ENCODE measurements at regions of chr3 and their contacts with region 1.

Region 1: DNA sequence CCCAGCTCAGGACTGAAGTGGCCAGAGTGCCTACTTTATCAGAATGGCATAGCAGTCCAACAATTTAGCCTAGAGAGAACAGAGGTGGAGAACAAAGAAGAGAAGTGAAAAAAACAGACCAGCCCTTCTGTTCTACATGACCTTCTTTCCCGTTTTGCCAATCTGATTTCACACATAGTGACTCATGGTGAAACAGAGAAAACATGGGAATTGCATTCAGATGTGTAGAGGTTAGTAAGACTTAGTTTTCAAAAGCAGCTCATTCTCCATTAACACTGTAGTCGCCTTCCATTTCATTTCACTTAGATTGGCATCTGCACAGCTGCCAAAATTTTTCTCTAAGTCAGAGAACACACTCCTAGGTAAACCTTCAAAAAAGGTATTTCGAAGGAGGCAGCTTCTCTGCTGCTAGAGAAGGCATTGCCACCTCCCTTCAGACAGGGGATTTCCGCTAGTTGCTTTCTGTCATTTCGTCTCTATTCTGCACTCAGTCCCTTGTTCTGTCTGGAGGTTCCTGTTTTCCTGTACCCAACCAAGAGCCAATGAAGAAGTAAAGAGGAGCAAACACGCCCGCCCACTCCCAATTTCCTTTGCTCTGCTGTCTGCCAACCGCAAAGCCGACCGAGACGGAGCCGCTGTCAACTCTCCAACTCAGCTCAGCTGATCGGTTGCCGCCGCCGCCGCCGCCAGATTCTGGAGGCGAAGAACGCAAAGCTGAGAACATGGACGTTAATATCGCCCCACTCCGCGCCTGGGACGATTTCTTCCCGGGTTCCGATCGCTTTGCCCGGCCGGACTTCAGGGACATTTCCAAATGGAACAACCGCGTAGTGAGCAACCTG is at the start of gene ARL6IP5:
- DNase-seq: peak; percentile 92
- ATAC-seq: peak; percentile 70
- H3K4me3 Mint-ChIP-seq: peak within 1 kb of the TSS; percentile 99
- H3K27ac Mint-ChIP-seq: peak within 1 kb of the TSS; percentile 97
- H3K4me1 Mint-ChIP-seq: peaks cover 52% of the 10 kb centered on the region
- H3K27me3 Mint-ChIP-seq: no peaks in the 10 kb centered on the region
- total RNA-seq, gene ARL6IP5: 147 to 150 TPM

Region 2: DNA sequence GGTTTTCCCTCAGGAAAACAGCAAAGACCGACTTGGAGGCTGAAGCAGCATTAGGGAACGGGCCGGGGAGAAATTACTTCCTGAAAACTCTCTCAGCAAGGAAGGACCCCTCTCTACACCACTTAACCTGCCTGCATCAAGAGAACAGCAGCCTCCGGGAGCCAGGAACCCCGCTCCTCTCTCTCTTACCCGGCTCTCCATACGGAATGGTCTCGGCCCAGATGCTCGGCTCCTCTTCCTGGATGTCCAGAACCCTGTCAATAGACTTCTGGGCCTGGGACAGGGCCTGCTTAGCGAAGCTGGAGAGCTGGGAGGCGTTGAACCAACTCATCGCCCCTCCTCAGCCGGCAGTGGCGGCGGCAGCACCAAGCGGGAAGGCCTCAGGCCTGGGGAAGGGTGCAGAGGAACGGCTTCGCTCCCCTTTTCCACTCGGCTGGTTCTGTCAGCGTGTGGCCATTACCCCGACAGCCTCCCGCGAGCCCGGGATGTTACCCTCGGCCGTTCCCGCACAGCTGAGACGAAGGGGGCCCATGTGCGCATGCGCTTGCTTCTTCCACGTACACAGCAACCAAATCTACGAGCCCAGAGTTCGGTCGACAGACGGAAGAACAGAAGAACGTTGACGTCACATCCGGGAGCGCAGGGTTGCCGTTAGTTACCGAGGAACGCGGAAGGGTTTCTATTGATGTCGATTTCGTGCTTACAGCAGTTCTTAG is 32.6 kb before region 1 on chr3 and contains the start of gene TMF1:
- POLR2A ChIA-PET with region 1: interaction called, 60 read pairs
- DNase-seq: peak; percentile 95
- ATAC-seq: peak; percentile 95
- H3K4me3 Mint-ChIP-seq: peak within 1 kb of the TSS; percentile 98
- H3K27ac Mint-ChIP-seq: peak within 1 kb of the TSS; percentile 97
- H3K4me1 Mint-ChIP-seq: peaks cover 39% of the 10 kb centered on the region
- H3K27me3 Mint-ChIP-seq: no peaks in the 10 kb centered on the region
- total RNA-seq, gene TMF1: 53.5 to 55.2 TPM

Region 3: DNA sequence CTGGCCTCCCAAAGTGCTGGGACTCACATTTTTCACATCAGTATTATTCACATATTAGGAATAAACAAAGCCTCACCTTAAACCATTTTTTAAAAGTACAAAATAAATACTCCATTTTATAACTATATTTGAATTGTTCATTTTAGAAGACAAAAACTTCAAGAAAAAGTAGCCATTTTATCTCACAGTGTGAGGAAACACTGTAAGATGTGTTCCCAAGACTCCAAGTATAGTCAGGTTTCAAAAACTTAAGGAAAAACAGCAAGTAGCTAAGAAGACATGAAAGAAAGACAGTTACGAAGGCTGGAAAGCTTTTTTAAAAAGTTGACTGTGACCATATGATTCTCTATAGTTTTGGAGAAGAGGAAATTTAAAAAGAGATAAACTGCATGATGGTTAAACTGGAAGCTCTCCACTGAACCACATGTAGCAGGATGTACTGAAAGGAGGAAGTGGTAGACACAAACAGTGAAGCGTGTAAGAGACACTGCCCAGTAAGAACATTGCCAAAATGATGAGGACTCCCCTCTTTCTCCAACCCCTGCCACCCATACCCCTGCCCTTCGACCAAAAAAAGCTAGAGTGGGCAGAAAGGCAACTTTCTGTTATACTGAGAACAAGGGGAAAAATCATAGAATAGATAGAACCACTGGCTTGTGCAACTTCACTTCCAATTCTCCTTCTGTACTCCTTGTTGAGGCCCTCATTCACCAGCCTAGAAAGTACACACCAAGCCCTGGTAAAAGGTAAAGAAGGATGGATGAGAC is 26.2 kb before region 1 on chr3:
- POLR2A ChIA-PET with region 1: interaction called, 60 read pairs
- DNase-seq: no peak
- ATAC-seq: peak; percentile 98
- H3K4me3 Mint-ChIP-seq: peak overlapping the region; percentile 60
- H3K27ac Mint-ChIP-seq: peak overlapping the region; percentile 92
- H3K4me1 Mint-ChIP-seq: peaks cover 30% of the 10 kb centered on the region
- H3K27me3 Mint-ChIP-seq: no peaks in the 10 kb centered on the region

Region 4: DNA sequence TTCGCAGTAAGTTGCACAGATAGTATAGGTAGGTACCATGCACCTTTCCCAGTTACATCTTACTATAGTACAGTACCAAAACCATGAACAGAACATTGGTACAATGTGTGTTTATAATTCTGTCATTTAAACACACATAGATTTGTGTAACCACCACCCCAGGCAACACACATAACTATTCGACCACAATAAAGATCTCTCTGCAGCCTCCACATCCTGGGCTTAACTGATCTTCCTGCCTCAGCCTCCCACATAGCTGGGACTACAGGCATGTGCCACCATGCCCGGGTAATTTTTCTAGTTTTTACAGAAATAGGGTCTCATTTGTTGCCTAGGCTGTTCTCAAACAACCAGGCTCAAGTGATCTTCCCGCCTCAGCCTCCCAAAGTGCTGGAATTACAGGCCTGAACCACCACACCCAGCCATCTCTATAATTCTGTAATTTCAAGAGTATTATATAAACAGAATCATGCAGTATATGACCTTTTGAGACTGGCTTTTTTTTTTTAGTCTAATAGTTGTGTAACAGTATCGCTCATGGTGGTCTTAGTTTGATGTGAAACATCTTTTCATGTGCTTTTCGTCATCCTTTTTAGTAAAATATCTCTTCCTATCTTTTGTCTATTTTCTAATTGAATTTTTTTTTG is 19.1 kb before region 1 on chr3:
- POLR2A ChIA-PET with region 1: interaction called, 44 read pairs
- DNase-seq: no peak
- ATAC-seq: peak; percentile 77
- H3K4me3 Mint-ChIP-seq: peak overlapping the region; percentile 60
- H3K27ac Mint-ChIP-seq: peak overlapping the region; percentile 63
- H3K4me1 Mint-ChIP-seq: peaks cover 31% of the 10 kb centered on the region
- H3K27me3 Mint-ChIP-seq: no peaks in the 10 kb centered on the region

Region 5: DNA sequence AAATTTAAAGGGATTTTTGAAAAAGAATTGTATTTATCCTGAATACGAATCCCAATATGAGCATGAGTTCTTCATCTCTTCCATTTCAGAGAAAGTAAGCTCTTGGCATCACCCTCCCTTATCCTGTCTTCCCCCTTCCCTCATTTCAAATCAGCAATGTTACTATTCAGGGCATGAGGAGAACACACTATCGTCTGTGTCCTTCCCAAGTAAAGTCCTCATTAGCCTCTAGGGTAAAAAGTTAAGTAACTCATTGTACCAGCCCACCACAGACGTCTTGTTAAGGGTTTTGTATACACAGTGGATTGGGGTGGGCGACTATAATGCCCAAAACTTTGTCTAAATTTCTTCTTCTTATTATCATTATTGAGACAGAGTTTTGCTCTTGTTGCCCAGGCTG is 15.0 kb after region 1 on chr3:
- POLR2A ChIA-PET with region 1: interaction called, 21 read pairs
- DNase-seq: no peak
- ATAC-seq: no peak
- H3K4me3 Mint-ChIP-seq: no peak overlapping the region
- H3K27ac Mint-ChIP-seq: peak overlapping the region; percentile 35
- H3K4me1 Mint-ChIP-seq: peaks cover 46% of the 10 kb centered on the region
- H3K27me3 Mint-ChIP-seq: no peaks in the 10 kb centered on the region

Region 6: DNA sequence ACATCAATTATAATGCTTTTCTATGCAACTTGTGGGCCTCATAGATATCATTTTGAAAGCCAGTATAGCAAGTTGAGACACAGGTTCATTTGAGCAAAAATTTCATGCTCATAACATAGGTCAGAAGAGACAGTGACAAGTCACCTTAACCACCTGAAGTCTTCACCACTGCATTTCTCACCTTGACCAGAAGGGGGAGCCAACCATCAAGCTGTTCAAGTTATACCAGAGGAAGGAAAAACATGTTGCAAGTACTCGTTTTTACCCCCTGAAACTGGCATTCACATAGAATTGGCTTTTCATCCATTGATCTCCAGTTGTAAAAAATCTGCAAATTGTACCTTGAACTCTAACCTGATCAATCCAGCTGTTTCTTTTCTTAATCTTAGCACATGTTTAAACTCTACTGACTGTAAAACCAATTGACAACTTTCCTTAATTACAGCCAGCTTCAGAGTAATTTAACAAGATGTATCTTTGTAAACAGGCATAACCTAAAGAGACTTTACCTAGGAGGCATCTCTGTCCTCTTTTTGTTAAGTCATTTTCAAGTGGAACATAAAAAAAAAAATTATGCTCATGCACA is 36.4 kb after region 1 on chr3:
- POLR2A ChIA-PET with region 1: no interaction called
- DNase-seq: peak; percentile 56
- ATAC-seq: peak; percentile 78
- H3K4me3 Mint-ChIP-seq: no peak overlapping the region
- H3K27ac Mint-ChIP-seq: no peak overlapping the region
- H3K4me1 Mint-ChIP-seq: peaks cover 5% of the 10 kb centered on the region
- H3K27me3 Mint-ChIP-seq: no peaks in the 10 kb centered on the region

Region 7: DNA sequence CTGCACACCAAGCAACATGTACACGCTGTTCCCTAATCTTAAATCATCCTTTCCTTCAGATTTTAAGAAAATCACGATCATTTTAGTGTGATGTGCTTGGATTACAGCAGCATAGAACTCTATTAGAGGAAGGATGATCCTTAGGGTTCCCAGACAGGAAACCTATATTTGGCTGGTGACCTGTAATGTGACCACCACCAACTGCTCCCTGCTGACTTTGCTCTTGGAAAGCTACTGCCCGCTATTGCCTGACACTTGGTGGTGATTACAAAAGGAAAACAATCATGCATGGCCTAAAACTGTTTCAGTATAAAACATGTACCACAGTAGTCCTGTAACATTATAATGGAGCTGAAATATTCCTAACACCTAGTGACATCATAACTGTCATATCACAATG is 65.0 kb after region 1 on chr3:
- POLR2A ChIA-PET with region 1: no interaction called
- DNase-seq: no peak
- ATAC-seq: no peak
- H3K4me3 Mint-ChIP-seq: no peak overlapping the region
- H3K27ac Mint-ChIP-seq: no peak overlapping the region
- H3K4me1 Mint-ChIP-seq: no peaks in the 10 kb centered on the region
- H3K27me3 Mint-ChIP-seq: peaks cover 11% of the 10 kb centered on the region